AG04449 (cell line): ENCODE measurements at regions of chr13 and their contacts with region 1.

Region 1: DNA sequence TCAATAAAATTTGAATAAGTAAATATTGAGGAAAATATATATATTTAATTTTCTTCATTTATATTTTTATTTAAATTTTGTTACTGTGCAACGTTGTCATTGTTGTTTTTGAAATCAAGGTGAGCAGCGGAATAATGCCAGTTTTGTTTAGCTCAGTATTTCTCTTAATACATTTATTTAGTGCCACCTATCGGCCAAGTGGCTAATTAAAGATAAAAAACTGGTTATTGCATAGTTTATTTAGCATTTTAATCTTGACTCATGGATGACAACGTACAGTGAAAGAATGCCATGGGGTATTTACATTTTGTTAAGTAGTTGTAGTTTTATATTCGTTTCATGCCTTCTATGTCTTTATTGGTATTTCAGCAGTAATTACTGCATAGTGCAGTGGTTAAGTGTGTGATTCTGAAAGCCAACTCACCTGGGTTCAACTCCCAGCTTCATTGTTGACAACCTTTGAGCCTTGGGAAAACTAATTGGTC is 265.9 kb downstream of the MYO16 start:
- DNase-seq: peak; percentile 26
- H3K4me3 ChIP-seq: no peak overlapping the region
- CTCF ChIP-seq: peak; percentile 17

Region 2: DNA sequence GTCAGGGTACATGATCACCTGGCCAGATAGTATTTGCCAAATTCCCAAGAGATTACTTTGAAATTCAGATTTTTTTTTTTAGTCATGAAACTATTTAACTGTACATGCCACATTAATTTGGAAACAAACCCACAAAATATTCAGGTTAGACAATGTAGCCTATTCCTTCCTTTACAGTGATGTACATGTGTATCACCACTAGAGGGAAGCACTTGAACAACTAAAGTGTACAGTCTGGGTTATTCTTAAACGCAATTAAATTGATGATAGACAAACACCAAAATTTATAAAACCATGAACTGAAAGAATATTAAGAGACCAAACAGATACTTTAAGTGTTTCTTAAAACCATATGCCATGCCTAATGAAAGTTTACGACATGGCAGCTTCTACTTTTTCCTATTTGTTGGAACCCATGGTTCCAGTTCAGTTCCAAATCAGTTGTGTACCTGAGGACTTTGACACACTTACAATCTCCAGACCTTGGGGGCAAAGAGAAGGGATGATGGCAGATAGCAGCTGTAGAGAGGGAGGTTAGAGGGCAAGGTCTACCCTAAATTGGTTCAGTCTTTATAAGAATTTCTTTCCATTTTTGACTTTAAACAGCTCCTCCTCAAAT is 572.9 kb before region 1 on chr13:
- CTCF ChIA-PET with region 1: interaction called, 18 read pairs
- POLR2A ChIA-PET with region 1: no interaction called
- DNase-seq: no peak
- H3K4me3 ChIP-seq: no peak overlapping the region
- CTCF ChIP-seq: peak; percentile 60

Region 3: GRCh38 chr13:108342369-108343289 is 552.6 kb before region 1 on chr13:
- CTCF ChIA-PET with region 1: interaction called, 19 read pairs
- POLR2A ChIA-PET with region 1: no interaction called
- DNase-seq: no peak
- H3K4me3 ChIP-seq: no peak overlapping the region
- CTCF ChIP-seq: peak; percentile 31

Region 4: GRCh38 chr13:108609353-108609752 is 285.9 kb before region 1 on chr13:
- CTCF ChIA-PET with region 1: interaction called, 64 read pairs
- POLR2A ChIA-PET with region 1: no interaction called
- DNase-seq: peak; percentile 0
- H3K4me3 ChIP-seq: no peak overlapping the region
- CTCF ChIP-seq: peak; percentile 15

Region 5: DNA sequence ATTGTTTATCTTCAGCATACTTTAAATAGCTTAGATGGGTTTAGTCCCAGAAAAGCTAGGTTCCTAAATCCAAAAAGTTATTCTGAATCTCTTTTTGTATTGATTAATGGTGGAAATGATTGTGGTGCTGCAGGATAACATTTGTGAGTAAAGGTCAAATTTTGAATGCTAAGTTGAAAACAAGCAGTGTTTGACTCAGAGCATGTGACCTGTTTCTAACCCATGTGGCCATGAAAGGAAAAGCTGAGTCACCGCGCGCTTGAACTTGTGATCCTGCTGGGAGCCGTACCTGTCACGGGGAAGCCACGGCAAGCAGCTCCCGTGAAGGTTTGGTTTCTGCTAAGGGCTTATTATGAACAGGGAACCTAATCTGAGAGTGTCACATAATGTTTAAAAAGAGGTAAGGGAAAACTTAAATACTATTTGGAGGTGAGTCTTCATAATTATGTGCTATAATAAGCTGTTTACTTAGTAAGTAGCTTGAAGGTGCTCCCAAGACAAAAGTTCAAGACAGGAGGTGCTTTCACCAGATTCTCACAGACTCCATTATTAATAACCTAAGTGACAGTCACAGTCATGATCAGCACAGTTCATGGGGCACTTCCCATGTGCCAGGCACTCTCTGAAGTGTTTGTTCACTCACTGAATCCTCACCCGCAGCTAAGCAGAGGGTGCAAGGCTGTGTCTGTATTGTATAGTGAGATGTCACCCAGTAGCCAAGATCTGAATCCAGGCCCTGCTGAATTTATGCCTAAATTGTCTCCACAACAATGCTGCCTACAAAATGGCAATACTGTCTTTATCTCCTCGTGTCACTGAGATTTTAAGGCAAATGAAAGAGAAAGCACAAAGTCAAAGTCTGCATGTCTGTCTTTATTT is 20.6 kb after region 1 on chr13:
- CTCF ChIA-PET with region 1: interaction called, 15 read pairs
- POLR2A ChIA-PET with region 1: no interaction called
- DNase-seq: no peak
- H3K4me3 ChIP-seq: no peak overlapping the region
- CTCF ChIP-seq: no peak